H1 (cell line): ENCODE measurements at regions of chr1 and their contacts with region 1.

Region 1: GRCh38 chr1:218330043-218330623 is 15.0 kb upstream of the TGFB2 start:
- DNase-seq: no peak
- H3K4me3 ChIP-seq: no peak overlapping the region
- H3K27ac ChIP-seq: no peak overlapping the region
- H3K4me1 ChIP-seq: no peaks in the 10 kb centered on the region
- H3K27me3 ChIP-seq: no peaks in the 10 kb centered on the region
- CTCF ChIP-seq: peak in 1 of 3 experiments; percentile 42; a peak in 2 of 4 replicates
- EP300 ChIP-seq: no peak
- POLR2A ChIP-seq: no peak
- RAD21 ChIP-seq: peak; percentile 58 to 77

Region 2: DNA sequence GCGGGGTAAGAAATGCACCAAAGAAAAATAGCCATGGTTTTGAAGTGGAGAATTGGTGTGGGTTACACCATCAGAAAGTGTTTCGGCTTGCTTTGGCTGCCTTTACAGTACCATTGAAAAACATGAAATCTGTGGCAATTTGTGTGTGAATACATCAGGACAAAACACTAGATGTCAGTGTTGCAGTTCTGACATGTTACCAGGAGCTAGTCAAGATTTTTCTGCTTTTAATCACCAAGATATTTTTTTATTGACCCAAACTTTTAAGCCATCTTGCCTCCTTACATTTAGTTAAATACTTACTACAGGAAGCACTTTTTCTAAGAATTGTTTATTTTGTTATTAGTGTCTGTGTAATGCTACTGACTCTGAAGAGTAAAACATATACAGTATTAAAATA is 30.7 kb before region 1 on chr1:
- CTCF ChIA-PET with region 1: interaction called, 10 read pairs
- POLR2A ChIA-PET with region 1: no interaction called
- DNase-seq: no peak
- H3K4me3 ChIP-seq: no peak overlapping the region
- H3K27ac ChIP-seq: no peak overlapping the region
- H3K4me1 ChIP-seq: peaks cover 3 to 31% (median 15%) of the 10 kb centered on the region in 4 experiments; a peak in 6 of 7 replicates
- H3K27me3 ChIP-seq: no peaks in the 10 kb centered on the region
- CTCF ChIP-seq: peak in 2 of 3 experiments; percentile 17 to 56; a peak in 2 of 4 replicates
- EP300 ChIP-seq: no peak
- POLR2A ChIP-seq: no peak
- RAD21 ChIP-seq: peak; percentile 59 to 65

Region 3: DNA sequence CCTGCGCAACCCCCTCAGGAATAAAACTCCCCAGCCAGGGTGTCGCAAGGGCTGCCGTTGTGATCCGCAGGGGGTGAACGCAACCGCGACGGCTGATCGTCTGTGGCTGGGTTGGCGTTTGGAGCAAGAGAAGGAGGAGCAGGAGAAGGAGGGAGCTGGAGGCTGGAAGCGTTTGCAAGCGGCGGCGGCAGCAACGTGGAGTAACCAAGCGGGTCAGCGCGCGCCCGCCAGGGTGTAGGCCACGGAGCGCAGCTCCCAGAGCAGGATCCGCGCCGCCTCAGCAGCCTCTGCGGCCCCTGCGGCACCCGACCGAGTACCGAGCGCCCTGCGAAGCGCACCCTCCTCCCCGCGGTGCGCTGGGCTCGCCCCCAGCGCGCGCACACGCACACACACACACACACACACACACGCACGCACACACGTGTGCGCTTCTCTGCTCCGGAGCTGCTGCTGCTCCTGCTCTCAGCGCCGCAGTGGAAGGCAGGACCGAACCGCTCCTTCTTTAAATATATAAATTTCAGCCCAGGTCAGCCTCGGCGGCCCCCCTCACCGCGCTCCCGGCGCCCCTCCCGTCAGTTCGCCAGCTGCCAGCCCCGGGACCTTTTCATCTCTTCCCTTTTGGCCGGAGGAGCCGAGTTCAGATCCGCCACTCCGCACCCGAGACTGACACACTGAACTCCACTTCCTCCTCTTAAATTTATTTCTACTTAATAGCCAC is 15.7 kb after region 1 on chr1:
- CTCF ChIA-PET with region 1: interaction called, 25 read pairs
- POLR2A ChIA-PET with region 1: interaction called, 10 read pairs
- DNase-seq: peak in 1 of 2 experiments; percentile 75
- H3K4me3 ChIP-seq: peak overlapping the region; percentile 72 to 88 (median 80)
- H3K27ac ChIP-seq: no peak overlapping the region
- H3K4me1 ChIP-seq: no peaks in the 10 kb centered on the region; a peak in 3 of 7 replicates
- H3K27me3 ChIP-seq: peaks cover 0 to 16% (median 6%) of the 10 kb centered on the region in 4 experiments; a peak in 5 of 7 replicates
- CTCF ChIP-seq: no peak
- EP300 ChIP-seq: no peak
- POLR2A ChIP-seq: 0 out of 3 replicates have a peak, but pooled peaks of 1 of the 2 experiments have one; percentile 17
- RAD21 ChIP-seq: no peak

Region 4: DNA sequence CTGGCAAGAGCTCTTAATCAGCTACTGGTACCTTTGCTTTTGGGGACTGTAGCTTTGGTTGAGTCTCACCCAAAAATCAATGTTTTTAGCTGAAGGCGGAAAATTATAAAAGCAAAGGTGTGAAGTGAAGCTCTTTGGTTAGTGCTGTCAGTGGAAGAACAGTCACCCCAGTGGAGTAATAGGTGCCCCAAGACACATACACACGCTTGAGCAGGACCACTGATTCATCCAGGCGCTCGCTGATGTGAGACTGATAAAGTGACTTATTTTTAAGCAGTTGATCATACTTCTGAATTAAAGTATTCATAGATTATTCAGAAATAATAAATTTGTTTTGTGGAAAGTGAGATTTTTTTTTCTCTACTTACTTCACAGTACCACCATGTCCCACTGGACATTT is 52.1 kb after region 1 on chr1:
- CTCF ChIA-PET with region 1: no interaction called
- POLR2A ChIA-PET with region 1: no interaction called
- DNase-seq: no peak
- H3K4me3 ChIP-seq: no peak overlapping the region
- H3K27ac ChIP-seq: no peak overlapping the region
- H3K4me1 ChIP-seq: no peaks in the 10 kb centered on the region
- H3K27me3 ChIP-seq: no peaks in the 10 kb centered on the region
- CTCF ChIP-seq: no peak
- EP300 ChIP-seq: no peak
- POLR2A ChIP-seq: no peak
- RAD21 ChIP-seq: no peak